Ovary (tissue), 10 donors: ENCODE measurements at regions of chr1 and their contacts with region 1.

Region 1: GRCh38 chr1:167442124-167442848 is 76.0 kb downstream of the CD247 start:
- DNase-seq: peak; percentile 63 to 84 (median 77)
- H3K4me3 ChIP-seq: no peak overlapping the region
- H3K27ac ChIP-seq: no peak overlapping the region
- H3K4me1 ChIP-seq: no peaks in the 10 kb centered on the region
- H3K27me3 ChIP-seq: no peaks in the 10 kb centered on the region
- CTCF ChIP-seq: peak; percentile 55 to 70 (median 58)
- EP300 ChIP-seq: no peak
- POLR2A ChIP-seq: no peak

Region 2: DNA sequence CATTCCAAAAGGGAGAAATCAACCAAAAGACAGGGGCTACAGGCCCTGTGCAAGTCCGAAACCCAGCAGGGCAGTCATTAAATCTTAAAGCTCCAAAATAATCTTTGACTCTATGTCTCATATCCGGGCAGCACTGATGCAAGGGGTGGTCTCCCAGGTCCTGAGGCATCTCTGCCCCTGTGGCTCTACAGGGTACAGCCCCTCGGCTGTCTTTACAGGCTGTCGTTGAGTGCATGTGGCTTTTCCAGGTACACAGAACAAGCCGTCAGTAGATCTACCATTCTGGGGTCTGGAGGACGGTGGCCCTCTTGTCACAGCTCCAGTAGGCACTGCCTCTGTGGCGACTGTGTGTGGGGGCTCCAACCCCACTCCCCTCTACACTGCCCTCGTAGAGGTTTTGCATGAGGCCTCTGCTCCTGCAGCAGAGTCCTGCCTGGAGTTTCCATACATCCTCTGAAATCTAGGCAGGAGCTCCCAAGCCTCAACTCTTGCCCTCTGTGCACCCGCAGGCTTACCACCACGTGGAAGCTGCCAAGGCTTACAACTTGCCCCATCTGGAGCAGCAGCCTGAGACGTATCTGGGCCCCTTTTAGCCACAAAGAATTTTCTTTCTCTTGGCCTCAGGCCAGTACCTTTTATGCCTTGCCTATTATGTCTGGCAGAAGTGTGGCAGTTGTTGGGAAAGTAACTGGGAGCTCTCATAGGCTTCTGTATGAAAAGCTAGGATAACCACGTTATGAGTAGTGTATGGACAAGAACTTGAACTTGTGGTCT is 169.1 kb before region 1 on chr1:
- intact Hi-C with region 1: loop called in 2 of 4 experiments (anchors 5 to 10 kb)
- DNase-seq: no peak
- H3K4me3 ChIP-seq: no peak overlapping the region
- H3K27ac ChIP-seq: no peak overlapping the region
- H3K4me1 ChIP-seq: peaks cover 6% of the 10 kb centered on the region
- H3K27me3 ChIP-seq: no peaks in the 10 kb centered on the region
- CTCF ChIP-seq: no peak
- EP300 ChIP-seq: no peak
- POLR2A ChIP-seq: no peak

Region 3: GRCh38 chr1:167612587-167613385 is 170.5 kb after region 1 on chr1:
- intact Hi-C with region 1: no loop called
- DNase-seq: no peak
- H3K4me3 ChIP-seq: no peak overlapping the region
- H3K27ac ChIP-seq: no peak overlapping the region
- H3K4me1 ChIP-seq: peaks cover 6% of the 10 kb centered on the region
- H3K27me3 ChIP-seq: no peaks in the 10 kb centered on the region
- CTCF ChIP-seq: no peak
- EP300 ChIP-seq: no peak
- POLR2A ChIP-seq: no peak